Posterior vena cava (tissue), 2 donors: ENCODE measurements at regions of chr12 and their contacts with region 1.

Region 1: DNA sequence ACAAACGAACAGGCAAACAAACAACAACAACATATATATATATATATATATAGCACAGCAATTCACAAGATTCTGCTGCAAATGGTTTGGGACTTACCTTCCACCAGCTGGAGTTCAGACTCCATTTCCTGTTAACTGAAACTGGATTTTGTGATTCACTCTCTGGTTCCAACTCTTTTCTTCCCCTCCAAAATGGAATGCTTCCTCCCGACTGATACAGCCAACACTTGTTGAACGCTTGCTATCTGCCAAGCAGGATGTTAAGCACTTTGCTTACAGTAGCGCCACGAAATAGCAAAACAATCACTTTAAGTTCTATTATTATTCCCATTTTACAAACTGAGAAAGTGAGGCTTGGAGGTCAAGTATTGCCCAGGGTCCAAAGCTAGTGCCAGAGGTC is 116.0 kb upstream of the TMEM132C start:
- DNase-seq: no peak

Region 2: GRCh38 chr12:127830065-127830460 is 320.9 kb before region 1 on chr12:
- intact Hi-C with region 1: no loop called
- DNase-seq: no peak

Region 3: DNA sequence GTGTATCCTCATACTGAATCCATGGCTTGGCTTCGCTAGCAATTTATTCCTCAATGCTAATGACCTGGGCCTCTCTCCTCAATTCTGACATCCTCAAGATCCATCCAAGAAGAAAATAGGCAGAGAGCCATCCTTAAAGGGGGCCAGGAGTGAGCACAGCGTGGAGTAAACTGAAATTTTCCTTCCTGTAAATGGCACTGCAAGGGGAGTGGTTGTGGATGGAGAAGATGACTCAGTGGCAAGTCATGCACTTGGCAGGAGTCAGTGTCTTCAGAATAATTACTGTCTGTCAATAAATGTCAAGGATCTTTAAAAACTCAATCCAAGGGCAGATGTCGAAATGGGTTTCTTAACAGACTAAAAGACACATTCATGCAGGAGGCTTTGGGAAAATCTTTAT is 28.0 kb after region 1 on chr12:
- intact Hi-C with region 1: loop called in 1 of 2 experiments (anchors 1 kb)
- DNase-seq: no peak

Region 4: GRCh38 chr12:128425666-128426331 is 274.8 kb after region 1 on chr12:
- intact Hi-C with region 1: no loop called
- DNase-seq: no peak

Region 5: GRCh38 chr12:128702374-128702773 is 551.4 kb after region 1 on chr12:
- intact Hi-C with region 1: no loop called
- DNase-seq: peak; percentile 46